PC-9 (cell line): ENCODE measurements at regions of chr7 and their contacts with region 1.

Region 1: GRCh38 chr7:7761340-7761980 is 43.1 kb upstream of the RPA3 start:
- DNase-seq: peak in 1 of 2 experiments; percentile 54
- H3K4me3 ChIP-seq: no peak overlapping the region
- H3K27ac ChIP-seq: no peak overlapping the region
- H3K4me1 ChIP-seq: peaks cover 43% of the 10 kb centered on the region
- H3K27me3 ChIP-seq: no peaks in the 10 kb centered on the region
- CTCF ChIP-seq: peak; percentile 59; the same call in 1 of the 2 replicates

Region 2: GRCh38 chr7:7323352-7323751 is 438.1 kb before region 1 on chr7:
- CTCF ChIA-PET with region 1: no interaction called
- POLR2A ChIA-PET with region 1: no interaction called
- intact Hi-C with region 1: no loop called
- DNase-seq: no peak
- H3K4me3 ChIP-seq: no peak overlapping the region
- H3K27ac ChIP-seq: no peak overlapping the region
- H3K4me1 ChIP-seq: peaks cover 24% of the 10 kb centered on the region
- H3K27me3 ChIP-seq: no peaks in the 10 kb centered on the region
- CTCF ChIP-seq: no peak

Region 3: GRCh38 chr7:7443806-7444350 is 317.6 kb before region 1 on chr7:
- CTCF ChIA-PET with region 1: no interaction called
- POLR2A ChIA-PET with region 1: no interaction called
- intact Hi-C with region 1: no loop called
- DNase-seq: no peak
- H3K4me3 ChIP-seq: no peak overlapping the region
- H3K27ac ChIP-seq: no peak overlapping the region
- H3K4me1 ChIP-seq: peaks cover 8% of the 10 kb centered on the region
- H3K27me3 ChIP-seq: no peaks in the 10 kb centered on the region
- CTCF ChIP-seq: no peak

Region 4: GRCh38 chr7:7640221-7641128 is 121.0 kb before region 1 on chr7 and contains the start of gene UMAD1:
- CTCF ChIA-PET with region 1: no interaction called
- POLR2A ChIA-PET with region 1: no interaction called
- intact Hi-C with region 1: loop called (anchors 2 kb)
- DNase-seq: peak; percentile 99
- H3K4me3 ChIP-seq: peak within 1 kb of the TSS; percentile 83
- H3K27ac ChIP-seq: peak within 1 kb of the TSS; percentile 58
- H3K4me1 ChIP-seq: peaks cover 27% of the 10 kb centered on the region
- H3K27me3 ChIP-seq: no peaks in the 10 kb centered on the region
- CTCF ChIP-seq: no peak
- total RNA-seq, gene UMAD1: 15.5 and 20.5 TPM in 2 replicates

Region 5: DNA sequence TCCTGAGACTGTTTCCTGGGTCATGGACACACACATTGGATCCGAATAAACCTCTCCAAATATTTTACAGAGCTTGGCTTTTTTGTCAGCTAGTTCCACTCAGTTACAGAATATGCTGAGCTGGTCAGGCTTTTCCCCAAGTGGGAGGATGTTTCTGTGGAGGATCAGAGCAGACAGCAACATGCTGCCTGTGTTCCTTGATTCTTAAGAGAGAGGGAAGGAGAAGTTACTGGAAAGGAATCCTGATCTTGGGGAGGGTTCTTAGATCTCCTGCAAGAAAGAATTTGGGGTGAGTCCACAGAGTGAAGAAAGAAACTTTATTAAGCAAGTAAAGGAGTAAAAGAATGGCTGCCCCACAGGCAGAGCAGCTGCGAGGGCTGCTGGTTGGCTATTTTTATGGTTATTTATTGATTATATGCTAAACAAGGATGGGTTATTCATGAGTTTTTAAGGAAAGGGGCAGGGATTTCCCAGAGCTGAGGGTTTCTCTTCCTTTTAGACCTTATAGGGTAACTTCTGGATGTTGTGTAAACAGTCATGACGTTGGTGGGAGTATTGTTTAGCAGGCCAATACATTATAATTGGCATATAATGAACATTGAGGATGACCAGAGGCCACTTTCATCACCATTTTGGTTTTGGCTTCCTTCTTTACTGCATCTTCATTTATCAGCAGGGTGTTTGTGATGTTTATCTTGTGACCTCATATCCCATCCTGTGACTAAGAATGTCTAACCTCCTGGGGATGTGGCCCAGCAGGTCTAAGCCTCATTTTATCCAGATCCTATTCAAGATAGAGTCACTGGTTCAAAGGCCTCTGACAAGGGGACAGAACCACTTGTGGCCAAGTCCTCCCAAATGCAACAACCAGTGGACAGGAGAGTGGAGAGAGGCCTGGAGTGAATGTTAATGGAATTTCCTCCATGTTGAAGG is 34.0 kb after region 1 on chr7:
- CTCF ChIA-PET with region 1: no interaction called
- POLR2A ChIA-PET with region 1: no interaction called
- intact Hi-C with region 1: loop called (anchors 1 kb)
- DNase-seq: peak; percentile 74 to 98
- H3K4me3 ChIP-seq: no peak overlapping the region
- H3K27ac ChIP-seq: peak overlapping the region; percentile 81
- H3K4me1 ChIP-seq: peaks cover 44% of the 10 kb centered on the region
- H3K27me3 ChIP-seq: no peaks in the 10 kb centered on the region
- CTCF ChIP-seq: no peak

Region 6: GRCh38 chr7:8190119-8190895 is 428.8 kb after region 1 on chr7:
- CTCF ChIA-PET with region 1: interaction called, 3 read pairs
- POLR2A ChIA-PET with region 1: no interaction called
- intact Hi-C with region 1: loop called (anchors 1 kb)
- DNase-seq: peak; percentile 34 to 41
- H3K4me3 ChIP-seq: no peak overlapping the region
- H3K27ac ChIP-seq: no peak overlapping the region
- H3K4me1 ChIP-seq: no peaks in the 10 kb centered on the region
- H3K27me3 ChIP-seq: no peaks in the 10 kb centered on the region
- CTCF ChIP-seq: peak; percentile 77